ENCODE measurements at regions of chr6 and their contacts with region 1.

Region 1: DNA sequence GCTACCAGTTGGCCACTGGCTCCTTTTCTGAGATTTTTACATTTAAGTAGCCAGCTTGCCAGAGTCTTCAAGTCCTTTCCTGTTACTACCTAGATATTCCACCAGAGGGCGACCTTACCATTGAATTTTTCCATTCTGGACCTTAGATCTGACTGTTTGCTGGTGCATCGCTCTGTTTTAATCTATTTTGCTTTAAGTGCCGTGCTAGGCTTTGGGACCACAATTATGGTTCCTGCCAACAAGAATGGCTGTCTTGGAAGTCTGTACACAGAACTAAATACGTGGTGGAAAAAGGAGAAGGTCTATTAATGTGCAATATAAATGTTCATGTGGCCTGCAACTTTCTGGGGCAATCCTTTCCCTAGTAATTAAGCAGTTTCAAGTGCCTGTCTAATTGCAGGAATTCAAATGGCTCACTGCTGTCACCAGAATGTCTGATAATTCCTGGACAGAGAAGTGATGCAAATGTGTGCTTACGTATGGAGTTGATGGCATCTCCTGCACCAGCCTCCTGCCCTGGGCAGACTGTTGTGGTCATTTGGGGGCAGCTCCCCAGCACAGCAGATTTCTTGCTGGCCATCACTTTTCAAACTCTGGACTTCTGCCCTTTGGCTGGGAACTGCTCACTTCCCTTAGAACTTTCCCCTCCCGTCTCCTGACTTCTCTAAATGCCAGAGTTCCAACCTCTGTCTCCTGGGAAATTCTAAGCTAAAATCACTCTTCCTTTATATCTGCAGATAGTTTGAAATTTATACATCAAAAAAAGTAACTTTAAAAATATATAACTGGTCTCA is 5.6 kb upstream of the HLA-DOA start:
- DNase-seq: no peak
- H3K4me3 ChIP-seq: no peak overlapping the region
- H3K27ac ChIP-seq: peak overlapping the region; percentile 35
- H3K4me1 ChIP-seq: peaks cover 16% of the 10 kb centered on the region
- H3K27me3 ChIP-seq: no peaks in the 10 kb centered on the region
- CTCF ChIP-seq: peak; percentile 78 to 81 (median 79)
- POLR2A ChIP-seq: no peak

Region 2: GRCh38 chr6:32894080-32895005 is 120.7 kb before region 1 on chr6:
- intact Hi-C with region 1: no loop called
- DNase-seq: peak in 1 of 2 donors; percentile 95
- H3K4me3 ChIP-seq: peak overlapping the region; percentile 75 to 79
- H3K27ac ChIP-seq: peak overlapping the region; percentile 95
- H3K4me1 ChIP-seq: peaks cover 34% of the 10 kb centered on the region
- H3K27me3 ChIP-seq: no peaks in the 10 kb centered on the region
- CTCF ChIP-seq: no peak
- POLR2A ChIP-seq: peak in 1 of 2 donors; percentile 45

Region 3: DNA sequence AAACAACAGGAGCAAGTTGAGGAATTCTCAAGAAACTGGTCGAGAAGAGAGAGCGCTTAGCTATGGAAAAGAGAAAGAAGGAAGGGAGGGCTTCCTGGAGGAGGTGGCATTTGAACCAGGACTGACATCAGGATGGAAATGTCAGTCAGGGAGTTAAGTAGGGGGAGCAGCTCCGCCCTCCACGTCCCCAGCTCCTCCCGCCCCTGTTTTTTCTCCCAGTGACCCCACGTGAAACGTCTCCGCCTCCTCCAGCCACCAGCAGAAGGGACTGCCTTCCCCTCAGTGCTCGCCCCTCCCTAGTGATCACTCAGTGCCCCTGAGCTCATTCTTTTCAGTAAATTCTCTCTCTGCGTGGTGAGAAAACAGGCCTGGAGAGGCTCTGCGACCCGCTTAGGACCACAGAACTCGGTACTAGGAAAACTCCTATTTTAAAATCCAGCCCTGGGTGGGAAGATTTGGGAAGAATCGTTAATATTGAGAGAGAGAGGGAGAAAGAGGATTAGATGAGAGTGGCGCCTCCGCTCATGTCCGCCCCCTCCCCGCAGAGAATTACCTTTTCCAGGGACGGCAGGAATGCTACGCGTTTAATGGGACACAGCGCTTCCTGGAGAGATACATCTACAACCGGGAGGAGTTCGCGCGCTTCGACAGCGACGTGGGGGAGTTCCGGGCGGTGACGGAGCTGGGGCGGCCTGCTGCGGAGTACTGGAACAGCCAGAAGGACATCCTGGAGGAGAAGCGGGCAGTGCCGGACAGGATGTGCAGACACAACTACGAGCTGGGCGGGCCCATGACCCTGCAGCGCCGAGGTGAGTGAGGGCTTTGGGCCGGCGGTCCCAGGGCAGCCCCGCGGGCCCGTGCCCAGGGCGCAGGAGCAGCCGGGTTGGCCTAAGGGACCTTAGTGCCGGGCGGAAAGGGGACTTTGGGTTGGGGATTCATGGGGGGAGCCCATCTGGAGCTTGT is 65.4 kb after region 1 on chr6:
- intact Hi-C with region 1: loop called (anchors 2 kb)
- DNase-seq: peak in 1 of 2 donors; percentile 88
- H3K4me3 ChIP-seq: peak overlapping the region; percentile 53 to 57
- H3K27ac ChIP-seq: peak overlapping the region; percentile 91
- H3K4me1 ChIP-seq: peaks cover 13% of the 10 kb centered on the region
- H3K27me3 ChIP-seq: no peaks in the 10 kb centered on the region
- CTCF ChIP-seq: no peak
- POLR2A ChIP-seq: peak in 1 of 2 donors; percentile 43